GM10248 (cell line): ENCODE measurements at regions of chr5 and their contacts with region 1.

Region 1: DNA sequence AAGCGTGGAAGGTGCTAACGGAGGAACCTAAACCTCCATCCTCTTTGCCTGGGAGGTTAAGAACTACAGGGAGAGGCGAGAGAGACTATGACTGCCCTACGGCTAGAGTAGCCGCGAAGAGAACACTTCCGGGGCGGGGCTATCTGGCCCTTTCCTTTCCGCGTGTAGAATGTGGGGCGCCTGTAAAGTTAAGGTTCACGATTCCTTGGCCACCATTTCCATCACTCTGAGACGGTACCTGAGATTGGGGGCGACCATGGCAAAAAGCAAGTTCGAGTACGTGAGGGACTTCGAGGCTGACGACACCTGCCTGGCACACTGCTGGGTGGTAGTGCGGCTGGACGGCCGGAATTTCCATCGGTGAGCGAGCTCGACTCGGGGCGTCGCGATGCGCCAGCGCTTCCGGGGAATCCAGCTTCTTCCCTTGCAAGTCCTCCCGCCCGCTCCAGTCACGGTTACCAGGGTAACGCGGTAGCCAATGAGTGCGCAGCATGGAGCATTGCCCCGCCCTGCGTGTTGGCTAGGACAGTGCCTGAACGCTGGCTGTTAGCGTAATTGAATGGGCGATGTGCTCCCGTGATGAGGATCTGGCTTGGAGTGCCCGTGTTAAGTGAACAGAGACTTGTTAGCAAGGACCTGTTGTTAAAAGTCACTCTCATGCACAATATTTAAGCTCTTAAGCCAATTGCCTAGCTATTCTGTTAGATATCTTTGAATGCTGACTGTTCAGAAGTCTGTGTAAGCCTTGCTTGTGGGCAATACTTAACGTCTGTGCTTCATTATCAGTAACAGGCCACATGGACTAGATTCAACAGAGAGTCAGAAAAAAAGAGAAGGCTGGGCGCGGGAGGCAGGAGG is at the start of gene THG1L:
- DNase-seq: peak; percentile 94
- CTCF ChIP-seq: no peak

Region 2: GRCh38 chr5:156774273-156774672 is 957.2 kb before region 1 on chr5:
- CTCF ChIA-PET with region 1: no interaction called
- POLR2A ChIA-PET with region 1: no interaction called
- DNase-seq: no peak
- CTCF ChIP-seq: no peak

Region 3: GRCh38 chr5:157681048-157681447 is 50.5 kb before region 1 on chr5:
- CTCF ChIA-PET with region 1: no interaction called
- POLR2A ChIA-PET with region 1: interaction called, 10 read pairs
- DNase-seq: no peak
- CTCF ChIP-seq: no peak

Region 4: GRCh38 chr5:157718519-157718918 is 13.0 kb before region 1 on chr5:
- CTCF ChIA-PET with region 1: interaction called, 46 read pairs
- POLR2A ChIA-PET with region 1: no interaction called
- DNase-seq: peak; percentile 52
- CTCF ChIP-seq: peak; percentile 59

Region 5: DNA sequence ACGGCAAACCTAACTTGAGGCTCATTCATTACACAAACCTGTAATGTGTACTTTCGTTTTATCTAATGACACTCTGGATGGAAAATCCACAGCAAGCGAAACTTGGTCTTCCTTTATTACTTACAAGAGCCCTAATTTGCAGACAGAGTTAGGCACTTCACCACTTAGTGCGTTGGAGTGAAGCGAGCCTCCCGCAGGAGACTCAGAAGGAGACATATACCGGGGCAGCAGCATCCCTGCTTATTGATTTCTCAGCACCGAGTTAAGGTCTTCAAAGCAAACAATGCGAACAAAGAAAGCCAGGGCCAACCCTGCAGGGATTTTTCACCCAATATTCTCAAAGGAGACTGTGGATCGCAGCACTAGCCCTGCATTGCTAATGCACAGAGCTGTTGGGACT is 40.6 kb after region 1 on chr5:
- CTCF ChIA-PET with region 1: no interaction called
- POLR2A ChIA-PET with region 1: no interaction called
- DNase-seq: no peak
- CTCF ChIP-seq: no peak